Activated CD8-positive, alpha-beta T cell treated with anti-CD3 and anti-CD28 coated beads for 36 hours (primary cell): ENCODE measurements at regions of chr19 and their contacts with region 1.

Region 1: DNA sequence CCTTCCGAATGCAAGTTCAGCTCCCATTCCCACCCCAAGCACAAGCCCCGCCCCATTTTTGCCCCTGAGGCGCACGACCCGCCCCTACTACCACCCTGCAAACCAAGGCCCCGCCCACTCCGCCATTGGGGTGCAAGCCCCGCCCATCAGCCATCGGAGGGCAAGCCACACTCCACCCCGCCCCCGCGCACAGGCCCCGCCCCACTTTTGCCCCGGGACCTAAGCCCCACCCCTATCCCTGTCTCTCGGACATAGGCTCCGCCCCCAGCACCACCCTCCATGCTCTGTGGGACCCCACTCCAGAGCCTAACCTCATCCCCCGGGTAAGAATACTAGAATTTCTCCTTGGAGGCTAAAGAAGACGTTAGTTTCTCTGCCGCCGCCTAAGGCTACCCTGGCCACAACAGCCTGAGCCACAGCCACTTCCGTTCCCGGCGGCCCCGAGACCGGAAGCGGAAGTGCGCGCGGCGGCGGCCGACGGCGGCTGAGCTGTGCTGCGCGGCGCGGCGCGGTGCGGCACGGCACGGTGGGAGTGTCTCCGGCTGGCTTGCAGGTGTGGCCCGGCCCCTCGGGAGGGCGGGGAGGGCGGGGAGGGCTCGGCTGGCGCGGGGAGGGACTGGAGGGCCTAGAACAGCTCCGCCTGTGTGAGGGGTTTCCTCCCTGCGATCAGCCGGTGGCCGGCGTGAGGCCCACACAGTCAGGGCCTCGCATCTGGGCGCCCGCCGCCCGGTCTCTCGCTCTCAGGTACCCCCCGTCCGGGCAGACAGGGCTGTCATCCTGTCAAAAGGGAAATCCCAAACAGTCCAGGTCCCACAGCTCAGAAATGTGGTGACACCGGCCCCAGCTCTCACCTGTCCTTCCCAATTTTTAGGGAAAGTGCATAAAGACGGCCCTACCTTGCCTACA is at the start of gene ZNF333:
- DNase-seq: peak; percentile 100
- ATAC-seq: peak; percentile 93
- H3K4me3 Mint-ChIP-seq: peak within 1 kb of the TSS; percentile 92
- H3K27ac Mint-ChIP-seq: peak within 1 kb of the TSS; percentile 100
- H3K4me1 Mint-ChIP-seq: peaks cover 16% of the 10 kb centered on the region
- H3K27me3 Mint-ChIP-seq: no peaks in the 10 kb centered on the region
- CTCF ChIP-seq: no peak
- total RNA-seq, gene ZNF333: 12.2 to 14.0 TPM

Region 2: DNA sequence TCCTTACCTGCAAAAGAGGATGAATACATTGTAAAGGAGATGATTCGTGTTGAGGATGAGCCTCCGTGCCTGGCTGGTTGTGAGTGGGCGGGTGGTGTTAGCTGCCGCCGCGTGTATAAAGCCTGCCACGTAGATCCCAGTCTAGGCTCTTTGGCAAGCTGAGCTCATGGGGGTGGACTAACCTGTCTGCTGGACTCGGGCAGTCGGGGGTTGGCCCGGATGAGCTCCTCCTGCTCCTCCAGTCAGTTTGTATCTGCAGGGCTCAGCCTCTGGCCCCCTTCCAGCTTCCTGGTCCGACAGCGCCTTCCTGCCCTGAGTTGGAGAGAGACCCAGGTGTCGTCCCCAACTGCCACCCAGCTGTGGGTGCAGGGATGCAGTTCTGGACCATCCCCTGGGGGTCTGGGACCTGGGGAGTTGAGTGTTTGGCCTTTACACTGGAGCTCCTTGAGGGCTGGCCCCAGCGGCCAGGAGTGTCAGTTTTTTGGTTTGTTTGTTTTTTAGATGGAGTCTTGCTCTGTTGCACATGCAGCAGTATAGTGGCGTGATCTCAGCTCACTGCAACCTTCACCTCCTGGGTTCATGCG is 139.6 kb before region 1 on chr19:
- CTCF ChIA-PET with region 1: interaction called, 28 read pairs
- POLR2A ChIA-PET with region 1: no interaction called
- intact Hi-C with region 1: no loop called
- DNase-seq: peak; percentile 40
- ATAC-seq: no peak
- H3K4me3 Mint-ChIP-seq: no peak overlapping the region
- H3K27ac Mint-ChIP-seq: peak overlapping the region; percentile 35
- H3K4me1 Mint-ChIP-seq: peaks cover 40% of the 10 kb centered on the region
- H3K27me3 Mint-ChIP-seq: no peaks in the 10 kb centered on the region
- CTCF ChIP-seq: no peak

Region 3: DNA sequence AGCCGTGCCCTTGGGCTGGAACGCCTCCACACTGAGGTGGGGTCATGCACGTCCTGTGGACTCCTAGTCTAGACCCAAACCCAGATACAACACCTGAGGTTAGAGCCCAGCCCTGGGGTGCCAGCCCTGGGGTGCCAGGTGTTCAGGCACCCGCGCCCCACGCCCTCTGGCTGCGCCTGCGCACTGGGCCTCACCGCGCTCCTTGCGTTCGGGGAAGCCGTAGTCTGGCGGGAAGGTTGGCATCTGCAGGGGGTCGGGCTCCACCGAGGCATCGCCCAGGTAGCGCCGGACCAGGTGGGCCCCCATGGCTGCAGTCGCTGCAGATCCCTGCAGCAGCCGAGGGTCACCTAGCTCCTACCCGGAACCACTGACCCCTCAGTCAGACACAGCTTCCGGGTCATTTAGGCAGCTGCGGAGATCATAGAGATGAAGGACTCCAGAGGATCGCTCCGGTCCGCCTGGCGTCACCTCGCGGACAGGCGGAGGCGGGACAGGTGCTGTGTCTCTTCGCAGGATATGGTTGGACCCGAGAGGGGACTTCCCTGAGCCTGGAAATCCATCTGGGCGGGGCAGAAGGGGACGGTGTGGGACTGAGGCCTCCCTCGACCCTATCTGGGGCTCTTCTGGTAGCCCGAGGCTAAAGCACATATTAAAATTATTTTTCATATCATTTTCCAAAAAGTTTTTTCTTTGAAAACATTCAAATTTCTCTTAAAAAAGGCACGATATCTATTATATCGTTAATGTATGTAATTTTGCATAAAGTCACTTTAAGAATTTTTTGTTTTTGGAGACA is 118.0 kb before region 1 on chr19 and contains the start of gene NDUFB7:
- CTCF ChIA-PET with region 1: interaction called, 276 read pairs
- POLR2A ChIA-PET with region 1: interaction called, 27 read pairs
- intact Hi-C with region 1: loop called (anchors 2 kb)
- DNase-seq: peak; percentile 95
- ATAC-seq: peak; percentile 96
- H3K4me3 Mint-ChIP-seq: peak within 1 kb of the TSS; percentile 96
- H3K27ac Mint-ChIP-seq: peak within 1 kb of the TSS; percentile 91
- H3K4me1 Mint-ChIP-seq: peaks cover 39% of the 10 kb centered on the region
- H3K27me3 Mint-ChIP-seq: no peaks in the 10 kb centered on the region
- CTCF ChIP-seq: peak; percentile 65
- total RNA-seq, gene NDUFB7: 123 to 135 TPM